ENCODE measurements at regions of chr3 and their contacts with region 1.

Region 1: DNA sequence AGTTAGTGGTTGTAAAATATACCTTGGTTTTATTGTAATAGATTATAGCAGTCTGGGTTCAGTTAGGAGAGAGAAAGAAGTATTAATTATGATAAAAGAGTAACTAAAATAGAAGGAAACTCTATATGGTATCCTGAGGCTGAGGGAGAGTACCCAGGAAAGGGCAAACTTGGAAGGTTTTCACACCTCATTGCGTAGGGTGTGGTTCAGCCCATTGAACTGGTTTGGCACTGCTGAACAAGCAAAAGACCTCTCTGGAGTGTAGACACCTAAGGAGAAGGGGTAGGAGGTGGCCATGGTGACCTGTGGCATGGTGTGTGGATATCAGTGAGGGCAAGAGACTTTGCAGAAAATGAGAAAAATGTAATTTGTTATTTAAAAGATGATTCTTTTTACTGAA is 63.5 kb downstream of the STT3B start:
- DNase-seq: no peak
- H3K4me3 Mint-ChIP-seq: no peak overlapping the region
- H3K27ac Mint-ChIP-seq: peak overlapping the region; percentile 68
- H3K4me1 Mint-ChIP-seq: peaks cover 53% of the 10 kb centered on the region
- H3K27me3 Mint-ChIP-seq: no peaks in the 10 kb centered on the region

Region 2: GRCh38 chr3:31550452-31551251 is 45.5 kb before region 1 on chr3:
- intact Hi-C with region 1: loop called (anchors 5 kb)
- DNase-seq: no peak
- H3K4me3 Mint-ChIP-seq: no peak overlapping the region
- H3K27ac Mint-ChIP-seq: no peak overlapping the region
- H3K4me1 Mint-ChIP-seq: peaks cover 75% of the 10 kb centered on the region
- H3K27me3 Mint-ChIP-seq: no peaks in the 10 kb centered on the region

Region 3: GRCh38 chr3:31610700-31611275 is 14.6 kb after region 1 on chr3:
- intact Hi-C with region 1: loop called (anchors 2 kb)
- DNase-seq: no peak
- H3K4me3 Mint-ChIP-seq: no peak overlapping the region
- H3K27ac Mint-ChIP-seq: no peak overlapping the region
- H3K4me1 Mint-ChIP-seq: peaks cover 71% of the 10 kb centered on the region
- H3K27me3 Mint-ChIP-seq: no peaks in the 10 kb centered on the region

Region 4: GRCh38 chr3:31671976-31672375 is 75.8 kb after region 1 on chr3:
- intact Hi-C with region 1: no loop called
- DNase-seq: no peak
- H3K4me3 Mint-ChIP-seq: no peak overlapping the region
- H3K27ac Mint-ChIP-seq: no peak overlapping the region
- H3K4me1 Mint-ChIP-seq: no peaks in the 10 kb centered on the region
- H3K27me3 Mint-ChIP-seq: no peaks in the 10 kb centered on the region

Measured in activated T-helper 1 cell treated with anti-CD3 and anti-CD28 coated beads, Interleukin-12 subunit alpha, Interleukin-12 subunit beta, Interleukin-2, Interleukin-4 antibody, amounts not matched to agents 30 ng/mL and 10 ng/mL and 1 ng/mL, durations not matched to agents 14 hours and 24 hours and 36 hours (primary cell).